H1 (cell line): ENCODE measurements at regions of chr4 and their contacts with region 1.

Region 1: DNA sequence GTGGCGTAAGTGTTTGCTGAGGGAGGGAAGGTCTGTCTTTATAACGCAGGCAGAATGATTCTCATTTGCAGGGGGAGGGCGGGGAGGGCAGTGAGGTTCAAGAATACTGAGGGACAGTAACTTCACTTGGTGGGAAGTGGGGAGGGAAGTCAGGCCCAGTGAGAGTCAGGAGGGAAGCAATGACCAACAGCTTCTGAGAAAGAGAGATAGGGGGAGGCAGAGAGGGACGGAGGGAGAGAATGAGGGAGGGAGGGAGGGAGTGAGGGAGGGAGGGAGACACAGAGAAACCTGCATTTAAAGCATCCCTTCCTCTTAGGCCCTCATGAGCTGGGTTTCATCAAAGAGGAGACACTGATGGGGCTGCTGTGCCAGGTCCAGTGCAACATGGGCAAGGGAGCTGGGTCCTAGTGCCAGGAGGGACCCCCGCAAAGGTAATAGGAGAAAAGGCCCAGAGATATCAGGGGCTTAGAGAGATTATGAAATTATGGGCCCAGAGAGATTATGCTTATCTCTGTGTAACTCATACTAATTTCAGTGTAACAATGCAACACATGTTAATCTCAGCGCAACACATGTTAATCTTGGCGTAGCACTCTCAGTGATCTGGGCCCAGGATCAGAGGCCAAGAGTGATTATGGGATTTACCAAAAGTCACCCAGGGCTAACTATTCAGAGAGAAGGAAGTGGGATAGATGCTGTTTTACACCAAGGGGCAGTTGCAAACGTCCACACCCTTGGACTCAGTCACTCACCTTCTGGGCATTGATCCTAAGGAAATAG is 112.1 kb downstream of the DRD5 start:
- DNase-seq: no peak
- H3K4me3 ChIP-seq: no peak overlapping the region
- H3K27ac ChIP-seq: no peak overlapping the region
- H3K4me1 ChIP-seq: peaks cover 0 to 3% (median 0%) of the 10 kb centered on the region in 4 experiments; a peak in 2 of 7 replicates
- H3K27me3 ChIP-seq: no peaks in the 10 kb centered on the region; a peak in 1 of 7 replicates
- CTCF ChIP-seq: peak in 1 of 3 experiments; percentile 1; a peak in 1 of 4 replicates
- EP300 ChIP-seq: no peak
- POLR2A ChIP-seq: no peak
- RAD21 ChIP-seq: no peak; a peak in 1 of 4 replicates

Region 2: DNA sequence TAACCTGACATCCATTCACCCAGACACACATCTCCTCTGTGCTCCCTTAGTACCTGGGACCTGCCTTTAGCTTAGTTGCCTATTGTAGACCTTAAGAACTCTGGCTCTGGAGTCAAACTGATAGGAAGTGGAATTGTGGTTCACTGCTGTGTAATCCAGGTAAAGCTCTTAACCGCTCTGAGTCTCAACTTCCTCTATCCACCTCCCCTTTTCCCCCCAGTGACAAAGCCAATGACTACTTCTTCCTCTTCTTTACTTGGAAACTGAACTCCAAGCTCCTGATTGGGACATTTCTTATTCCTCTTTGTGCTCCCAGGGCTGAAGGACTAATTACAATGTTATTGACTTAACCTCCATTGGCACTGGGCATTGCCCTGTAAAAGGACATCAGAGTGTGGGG is 18.0 kb before region 1 on chr4:
- CTCF ChIA-PET with region 1: interaction called, 10 read pairs
- POLR2A ChIA-PET with region 1: no interaction called
- DNase-seq: no peak
- H3K4me3 ChIP-seq: no peak overlapping the region
- H3K27ac ChIP-seq: no peak overlapping the region
- H3K4me1 ChIP-seq: peaks cover 0 to 2% (median under 1%) of the 10 kb centered on the region in 4 experiments; a peak in 1 of 7 replicates
- H3K27me3 ChIP-seq: no peaks in the 10 kb centered on the region
- CTCF ChIP-seq: no peak
- EP300 ChIP-seq: no peak
- POLR2A ChIP-seq: no peak
- RAD21 ChIP-seq: no peak

Region 3: DNA sequence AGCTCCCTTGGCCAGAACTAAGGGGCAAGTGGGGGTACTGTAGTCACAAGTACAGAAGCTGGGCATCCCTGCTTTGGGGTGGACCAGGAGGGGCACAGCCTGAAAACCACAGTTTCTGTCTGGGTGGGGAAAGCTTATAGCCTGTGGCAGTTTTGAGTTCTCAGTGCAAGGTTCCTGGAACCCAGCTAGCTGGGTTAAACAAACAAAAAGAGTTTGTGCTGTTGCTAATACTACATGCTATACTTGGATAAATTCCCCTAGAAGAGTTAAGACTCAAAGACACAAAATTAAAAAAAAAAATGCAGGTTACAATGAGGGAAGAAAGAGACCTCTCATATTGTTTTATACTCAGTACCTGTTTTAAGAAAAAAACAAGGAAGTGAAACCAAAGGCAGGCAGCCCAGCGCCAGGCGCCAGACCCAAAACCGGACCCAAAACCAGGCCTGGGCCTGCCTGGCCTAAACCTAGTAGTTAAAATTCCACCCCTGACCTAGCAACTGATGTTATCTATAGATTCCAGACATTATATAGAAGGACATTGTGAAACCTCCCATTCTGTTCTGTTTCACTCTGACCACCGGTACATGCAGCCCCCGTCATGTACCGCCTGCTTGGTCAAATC is 77.0 kb after region 1 on chr4:
- CTCF ChIA-PET with region 1: no interaction called
- POLR2A ChIA-PET with region 1: no interaction called
- DNase-seq: no peak
- H3K4me3 ChIP-seq: no peak overlapping the region
- H3K27ac ChIP-seq: no peak overlapping the region
- H3K4me1 ChIP-seq: no peaks in the 10 kb centered on the region
- H3K27me3 ChIP-seq: no peaks in the 10 kb centered on the region
- CTCF ChIP-seq: no peak
- EP300 ChIP-seq: no peak
- POLR2A ChIP-seq: no peak
- RAD21 ChIP-seq: no peak

Region 4: GRCh38 chr4:11106190-11106589 is 1212.7 kb after region 1 on chr4:
- CTCF ChIA-PET with region 1: no interaction called
- POLR2A ChIA-PET with region 1: no interaction called
- DNase-seq: no peak
- H3K4me3 ChIP-seq: no peak overlapping the region
- H3K27ac ChIP-seq: no peak overlapping the region
- H3K4me1 ChIP-seq: no peaks in the 10 kb centered on the region
- H3K27me3 ChIP-seq: no peaks in the 10 kb centered on the region
- CTCF ChIP-seq: no peak
- EP300 ChIP-seq: no peak
- POLR2A ChIP-seq: no peak
- RAD21 ChIP-seq: no peak